Activated naive CD4-positive, alpha-beta T cell treated with anti-CD3 and anti-CD28 coated beads for 36 hours (primary cell): ENCODE measurements at regions of chr2 and their contacts with region 1.

Region 1: GRCh38 chr2:88739985-88740600 is 48.6 kb downstream of the RPIA start:
- DNase-seq: peak; percentile 87
- H3K4me3 Mint-ChIP-seq: no peak overlapping the region
- H3K27ac Mint-ChIP-seq: peak overlapping the region; percentile 4
- H3K4me1 Mint-ChIP-seq: peaks cover 27% of the 10 kb centered on the region
- H3K27me3 Mint-ChIP-seq: no peaks in the 10 kb centered on the region

Region 2: DNA sequence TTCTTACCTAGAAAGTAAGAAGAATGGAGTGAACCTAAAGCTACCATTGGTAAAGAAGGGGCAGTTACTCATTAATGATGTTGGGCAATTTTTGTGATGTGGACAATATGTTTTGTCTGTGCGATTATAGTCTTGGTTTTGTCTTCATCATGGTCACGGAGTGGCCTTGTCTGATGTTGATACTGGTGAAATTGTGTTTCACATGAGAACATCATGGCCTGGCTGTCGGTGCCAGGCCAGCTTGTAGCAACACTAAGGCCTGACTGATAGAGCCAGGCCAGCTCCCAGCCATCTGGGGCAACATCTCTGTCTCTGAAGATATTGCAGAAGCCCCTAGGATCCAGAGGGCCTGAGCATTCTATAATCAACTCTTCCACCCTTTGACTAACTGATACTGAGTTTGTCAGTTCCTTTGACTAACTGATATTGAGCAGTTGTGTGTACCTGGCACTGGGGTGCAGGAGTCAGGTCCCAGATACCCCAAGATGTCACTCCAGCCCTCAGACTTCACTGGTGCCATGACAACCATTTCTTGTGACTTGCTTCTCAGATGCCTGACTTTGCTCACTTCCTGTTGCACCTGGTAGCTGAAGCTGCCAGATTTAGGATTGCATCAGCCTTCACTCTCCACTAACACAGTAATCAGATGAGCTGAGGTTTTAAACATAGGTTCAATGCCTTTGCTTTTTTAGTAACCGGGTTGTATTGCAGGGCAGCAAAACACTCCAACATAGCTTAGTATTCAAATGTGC is 13.9 kb after region 1 on chr2:
- CTCF ChIA-PET with region 1: interaction called, 21 read pairs
- intact Hi-C with region 1: no loop called
- DNase-seq: peak; percentile 79
- H3K4me3 Mint-ChIP-seq: no peak overlapping the region
- H3K27ac Mint-ChIP-seq: peak overlapping the region; percentile 98
- H3K4me1 Mint-ChIP-seq: peaks cover 57% of the 10 kb centered on the region
- H3K27me3 Mint-ChIP-seq: no peaks in the 10 kb centered on the region

Region 3: DNA sequence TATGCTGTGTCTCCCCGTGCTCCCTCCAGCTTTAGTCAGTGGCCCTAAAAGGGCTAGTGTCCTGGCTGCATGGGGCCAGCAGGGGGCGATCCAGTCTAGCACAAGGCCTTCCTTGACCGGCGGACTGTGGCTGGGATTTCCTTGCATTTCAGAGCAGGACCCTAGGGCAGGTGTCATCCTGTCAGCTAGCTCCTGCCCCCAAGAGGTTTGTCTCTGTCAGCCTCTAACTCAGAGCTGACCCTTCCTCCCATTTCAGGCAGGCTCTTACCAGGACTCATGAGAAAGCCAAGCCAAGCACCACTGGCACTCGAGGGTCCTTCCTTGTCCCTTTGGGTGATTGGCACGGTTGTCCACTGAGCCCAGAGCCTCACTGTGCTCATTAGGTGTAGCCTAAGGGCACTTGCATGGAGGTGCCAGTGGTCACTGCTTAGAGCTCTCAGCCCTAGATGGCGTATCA is 91.7 kb after region 1 on chr2:
- CTCF ChIA-PET with region 1: interaction called, 5 read pairs
- intact Hi-C with region 1: loop called (anchors 1 kb)
- DNase-seq: peak; percentile 74
- H3K4me3 Mint-ChIP-seq: no peak overlapping the region
- H3K27ac Mint-ChIP-seq: no peak overlapping the region
- H3K4me1 Mint-ChIP-seq: no peaks in the 10 kb centered on the region
- H3K27me3 Mint-ChIP-seq: peaks cover 2% of the 10 kb centered on the region

Region 4: DNA sequence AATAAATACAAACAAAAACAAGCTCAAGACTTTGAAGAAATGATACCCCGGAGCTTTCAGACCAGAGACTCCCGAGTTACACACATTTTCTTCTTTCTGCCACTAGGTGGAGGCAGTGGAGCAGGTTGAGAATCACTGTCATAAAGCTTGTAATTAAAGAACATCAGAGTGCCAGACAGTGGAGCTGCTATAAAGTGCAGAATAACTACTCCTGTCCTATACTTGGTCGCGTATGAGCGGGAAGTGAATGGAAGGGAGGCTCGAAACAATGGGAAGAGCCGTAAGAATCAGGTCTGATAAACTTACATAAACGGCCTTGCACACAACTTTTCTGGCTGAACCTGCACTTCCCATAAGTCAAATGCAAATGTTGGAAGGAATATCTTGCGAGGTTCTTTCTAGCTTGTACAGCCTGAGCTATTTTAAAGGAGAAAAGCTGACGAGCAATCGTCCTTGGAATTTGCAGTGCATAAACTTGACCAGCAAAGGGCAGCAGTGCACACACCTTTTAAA is 140.4 kb after region 1 on chr2:
- CTCF ChIA-PET with region 1: interaction called, 7 read pairs
- intact Hi-C with region 1: loop called (anchors 1 kb)
- DNase-seq: peak; percentile 61
- H3K4me3 Mint-ChIP-seq: no peak overlapping the region
- H3K27ac Mint-ChIP-seq: no peak overlapping the region
- H3K4me1 Mint-ChIP-seq: peaks cover 2% of the 10 kb centered on the region
- H3K27me3 Mint-ChIP-seq: peaks cover 6% of the 10 kb centered on the region

Region 5: DNA sequence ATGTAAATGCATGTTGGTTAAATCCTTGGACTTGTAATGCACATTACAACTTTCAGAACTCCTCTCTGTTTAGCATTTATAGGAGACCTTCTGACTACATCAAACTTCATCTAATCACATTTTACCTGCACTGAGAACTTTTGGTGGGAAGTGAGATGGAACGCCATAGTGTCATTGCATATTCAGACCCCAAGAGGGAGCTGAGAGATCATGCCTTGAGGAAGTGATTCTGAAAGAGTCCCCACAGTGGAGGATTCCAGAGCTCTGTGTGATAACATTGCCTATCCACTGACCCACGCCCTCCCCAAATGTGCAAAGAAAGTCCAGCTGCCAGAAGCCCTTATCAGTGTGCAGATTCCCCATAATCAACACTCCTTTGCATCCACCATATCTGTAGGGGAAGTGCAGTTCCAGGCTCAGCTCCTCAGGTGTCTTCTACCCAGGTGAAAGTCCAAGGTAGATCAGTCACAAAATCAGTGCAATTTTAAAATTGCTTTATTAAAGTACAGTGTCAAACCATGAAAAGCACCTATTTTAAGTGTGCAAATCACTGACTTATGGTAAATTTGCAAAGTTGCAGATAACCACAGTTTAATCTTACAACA is 163.8 kb after region 1 on chr2:
- CTCF ChIA-PET with region 1: no interaction called
- intact Hi-C with region 1: no loop called
- DNase-seq: peak; percentile 17
- H3K4me3 Mint-ChIP-seq: no peak overlapping the region
- H3K27ac Mint-ChIP-seq: no peak overlapping the region
- H3K4me1 Mint-ChIP-seq: no peaks in the 10 kb centered on the region
- H3K27me3 Mint-ChIP-seq: peaks cover 15% of the 10 kb centered on the region

Region 6: GRCh38 chr2:88950010-88950409 is 209.9 kb after region 1 on chr2:
- CTCF ChIA-PET with region 1: no interaction called
- intact Hi-C with region 1: loop called (anchors 5 kb)
- DNase-seq: no peak
- H3K4me3 Mint-ChIP-seq: no peak overlapping the region
- H3K27ac Mint-ChIP-seq: no peak overlapping the region
- H3K4me1 Mint-ChIP-seq: no peaks in the 10 kb centered on the region
- H3K27me3 Mint-ChIP-seq: peaks cover 17% of the 10 kb centered on the region